MCF 10A (cell line): ENCODE measurements at regions of chr1 and their contacts with region 1.

Region 1: GRCh38 chr1:212455803-212456528 is 23.2 kb downstream of the NENF start:
- DNase-seq: peak; percentile 88
- H3K4me3 Mint-ChIP-seq: no peak overlapping the region
- H3K27ac Mint-ChIP-seq: no peak overlapping the region
- H3K4me1 Mint-ChIP-seq: no peaks in the 10 kb centered on the region
- H3K27me3 Mint-ChIP-seq: no peaks in the 10 kb centered on the region
- CTCF ChIP-seq: peak; percentile 100

Region 2: DNA sequence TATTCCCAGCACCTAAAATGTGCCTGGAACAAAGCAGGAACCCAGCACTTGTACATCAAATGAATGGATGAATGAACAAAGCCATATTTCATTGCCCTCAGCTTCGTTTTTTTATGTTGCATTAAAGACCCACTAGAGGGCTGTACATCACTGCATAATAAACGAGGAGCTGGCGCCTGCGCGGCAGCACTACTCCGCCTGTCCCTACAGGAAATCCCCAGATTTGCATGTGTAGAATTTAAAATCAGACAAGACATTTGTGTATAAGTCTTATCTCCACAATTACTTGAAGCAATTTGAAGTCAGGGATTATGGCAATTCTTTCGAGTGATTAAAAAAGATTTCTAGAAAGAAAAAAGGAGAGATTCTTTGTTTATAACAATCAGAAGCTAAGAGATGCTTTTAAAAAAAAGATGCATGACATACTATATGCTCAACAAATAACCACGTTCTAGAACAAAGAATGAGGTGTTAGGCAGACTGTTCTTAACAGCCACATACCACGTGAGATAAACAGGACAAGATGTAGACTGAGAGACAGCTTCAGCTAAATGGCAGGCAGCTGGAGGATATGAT is 775.1 kb before region 1 on chr1:
- CTCF ChIA-PET with region 1: interaction called, 98 read pairs
- POLR2A ChIA-PET with region 1: interaction called, 4 read pairs
- intact Hi-C with region 1: loop called (anchors 1 kb)
- DNase-seq: peak; percentile 92
- H3K4me3 Mint-ChIP-seq: no peak overlapping the region
- H3K27ac Mint-ChIP-seq: peak overlapping the region; percentile 24
- H3K4me1 Mint-ChIP-seq: peaks cover 8% of the 10 kb centered on the region
- H3K27me3 Mint-ChIP-seq: no peaks in the 10 kb centered on the region
- CTCF ChIP-seq: peak; percentile 99

Region 3: GRCh38 chr1:212070720-212071302 is 385.2 kb before region 1 on chr1:
- CTCF ChIA-PET with region 1: interaction called, 481 read pairs
- POLR2A ChIA-PET with region 1: interaction called, 18 read pairs
- intact Hi-C with region 1: loop called (anchors 1 kb)
- DNase-seq: peak; percentile 72
- H3K4me3 Mint-ChIP-seq: no peak overlapping the region
- H3K27ac Mint-ChIP-seq: peak overlapping the region; percentile 13
- H3K4me1 Mint-ChIP-seq: no peaks in the 10 kb centered on the region
- H3K27me3 Mint-ChIP-seq: no peaks in the 10 kb centered on the region
- CTCF ChIP-seq: peak; percentile 97

Region 4: DNA sequence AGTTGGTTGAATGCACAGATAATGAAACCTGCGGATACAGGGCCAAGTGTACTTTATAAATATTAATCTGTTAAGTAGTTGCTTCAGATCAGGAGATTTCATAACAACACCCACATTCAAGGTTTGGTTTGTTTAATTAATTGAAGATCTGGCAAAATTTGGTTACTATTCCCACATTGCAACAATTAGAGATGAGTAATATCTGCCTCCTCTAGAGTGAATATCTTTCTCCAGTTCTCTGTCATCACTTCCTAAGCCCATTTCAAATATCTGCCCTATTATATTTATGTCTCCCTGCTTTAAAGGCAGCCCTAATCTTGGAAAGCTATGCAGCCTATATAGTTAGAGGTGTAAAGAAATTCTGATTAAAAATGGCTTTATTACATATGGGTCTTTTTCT is 109.4 kb before region 1 on chr1:
- CTCF ChIA-PET with region 1: interaction called, 32 read pairs
- POLR2A ChIA-PET with region 1: no interaction called
- intact Hi-C with region 1: no loop called
- DNase-seq: no peak
- H3K4me3 Mint-ChIP-seq: no peak overlapping the region
- H3K27ac Mint-ChIP-seq: no peak overlapping the region
- H3K4me1 Mint-ChIP-seq: no peaks in the 10 kb centered on the region
- H3K27me3 Mint-ChIP-seq: no peaks in the 10 kb centered on the region
- CTCF ChIP-seq: no peak

Region 5: GRCh38 chr1:212414328-212415106 is 41.4 kb before region 1 on chr1 and contains the start of gene PACC1:
- CTCF ChIA-PET with region 1: interaction called, 46 read pairs
- POLR2A ChIA-PET with region 1: interaction called, 4 read pairs
- intact Hi-C with region 1: no loop called
- DNase-seq: peak; percentile 93
- H3K4me3 Mint-ChIP-seq: peak within 1 kb of the TSS; percentile 80
- H3K27ac Mint-ChIP-seq: peak within 1 kb of the TSS; percentile 18
- H3K4me1 Mint-ChIP-seq: peaks cover 17% of the 10 kb centered on the region
- H3K27me3 Mint-ChIP-seq: no peaks in the 10 kb centered on the region
- CTCF ChIP-seq: no peak
- total RNA-seq, gene PACC1: 23.0 and 23.3 TPM in 2 replicates

Region 6: GRCh38 chr1:212721388-212722247 is 265.7 kb after region 1 on chr1:
- CTCF ChIA-PET with region 1: interaction called, 11 read pairs
- POLR2A ChIA-PET with region 1: no interaction called
- intact Hi-C with region 1: no loop called
- DNase-seq: peak; percentile 91
- H3K4me3 Mint-ChIP-seq: peak overlapping the region; percentile 51
- H3K27ac Mint-ChIP-seq: peak overlapping the region; percentile 21
- H3K4me1 Mint-ChIP-seq: peaks cover 18% of the 10 kb centered on the region
- H3K27me3 Mint-ChIP-seq: peaks cover 24% of the 10 kb centered on the region
- CTCF ChIP-seq: no peak

Region 7: DNA sequence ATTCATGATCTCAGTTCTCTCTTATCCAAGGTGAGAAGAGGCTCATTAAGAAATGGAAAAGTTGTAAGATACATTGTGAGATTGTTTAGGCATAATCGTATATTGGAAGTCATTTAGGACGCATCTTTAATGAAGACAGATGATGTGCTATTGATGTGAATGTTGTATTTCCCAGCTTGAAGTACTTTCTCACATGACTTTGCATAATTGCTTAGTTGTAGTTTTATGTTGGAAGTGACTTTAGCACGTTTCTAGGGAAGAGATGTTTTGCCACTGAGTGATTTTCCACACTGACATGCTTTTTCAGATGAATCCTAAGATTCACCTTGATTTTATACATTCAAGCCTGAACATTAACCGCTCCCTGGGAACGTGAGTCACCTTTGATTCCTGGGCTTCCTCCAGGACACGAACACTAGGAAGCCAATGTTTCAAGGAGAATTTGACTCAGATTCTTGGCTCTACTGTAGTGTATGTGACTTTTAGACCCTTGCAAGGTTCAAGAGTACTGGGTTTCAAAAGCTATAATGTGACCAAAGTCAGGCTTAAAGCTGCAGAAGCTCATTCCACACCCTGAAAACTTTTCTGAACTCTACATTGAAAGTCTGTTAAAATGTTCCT is 531.8 kb after region 1 on chr1:
- CTCF ChIA-PET with region 1: interaction called, 10 read pairs
- POLR2A ChIA-PET with region 1: interaction called, 3 read pairs
- intact Hi-C with region 1: no loop called
- DNase-seq: peak; percentile 74
- H3K4me3 Mint-ChIP-seq: no peak overlapping the region
- H3K27ac Mint-ChIP-seq: peak overlapping the region; percentile 22
- H3K4me1 Mint-ChIP-seq: peaks cover 9% of the 10 kb centered on the region
- H3K27me3 Mint-ChIP-seq: no peaks in the 10 kb centered on the region
- CTCF ChIP-seq: no peak